ENCODE measurements at regions of chr20 and their contacts with region 1.

Region 1: DNA sequence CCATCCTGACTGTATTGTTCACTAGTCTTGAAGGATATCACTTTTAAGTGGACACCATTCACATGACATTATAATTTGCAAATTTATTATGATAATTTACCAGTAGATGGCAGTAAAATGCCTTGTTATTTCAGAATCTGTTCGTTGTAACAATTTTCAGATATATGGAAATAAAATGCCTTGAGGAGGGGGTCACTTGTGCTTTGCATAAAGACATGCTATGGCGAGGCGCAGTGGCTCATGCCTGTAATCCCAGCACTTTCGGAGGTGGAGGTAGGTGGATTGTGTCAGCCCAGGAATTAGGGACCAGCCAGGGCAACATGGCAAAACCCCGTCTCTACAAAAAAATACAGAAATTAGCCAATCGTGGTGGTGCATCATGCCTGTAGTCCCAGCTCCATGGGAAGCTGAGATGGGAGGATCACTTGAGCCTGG is 9.0 kb upstream of the NCOA6 start:
- DNase-seq: no peak
- ATAC-seq: peak in 3 of 8 donors; percentile 39 to 58 (median 43)
- H3K4me3 ChIP-seq: no peak overlapping the region
- H3K27ac ChIP-seq: no peak overlapping the region
- H3K4me1 ChIP-seq: peaks cover 0 to 5% (median 0%) of the 10 kb centered on the region in 9 donors
- H3K27me3 ChIP-seq: no peaks in the 10 kb centered on the region
- CTCF ChIP-seq: peak; percentile 11 to 62 (median 50)

Region 2: GRCh38 chr20:34797012-34797995 is 37.2 kb before region 1 on chr20:
- intact Hi-C with region 1: no loop called
- DNase-seq: no peak
- ATAC-seq: no peak
- H3K4me3 ChIP-seq: no peak overlapping the region
- H3K27ac ChIP-seq: no peak overlapping the region
- H3K4me1 ChIP-seq: peaks cover 0 to 35% (median 8%) of the 10 kb centered on the region in 9 donors
- H3K27me3 ChIP-seq: no peaks in the 10 kb centered on the region
- CTCF ChIP-seq: no peak

Region 3: GRCh38 chr20:35063168-35063567 is 228.7 kb after region 1 on chr20:
- intact Hi-C with region 1: no loop called
- DNase-seq: no peak
- ATAC-seq: no peak
- H3K4me3 ChIP-seq: no peak overlapping the region
- H3K27ac ChIP-seq: no peak overlapping the region
- H3K4me1 ChIP-seq: peaks cover 0 to 33% (median 18%) of the 10 kb centered on the region in 9 donors
- H3K27me3 ChIP-seq: no peaks in the 10 kb centered on the region
- CTCF ChIP-seq: no peak

Region 4: DNA sequence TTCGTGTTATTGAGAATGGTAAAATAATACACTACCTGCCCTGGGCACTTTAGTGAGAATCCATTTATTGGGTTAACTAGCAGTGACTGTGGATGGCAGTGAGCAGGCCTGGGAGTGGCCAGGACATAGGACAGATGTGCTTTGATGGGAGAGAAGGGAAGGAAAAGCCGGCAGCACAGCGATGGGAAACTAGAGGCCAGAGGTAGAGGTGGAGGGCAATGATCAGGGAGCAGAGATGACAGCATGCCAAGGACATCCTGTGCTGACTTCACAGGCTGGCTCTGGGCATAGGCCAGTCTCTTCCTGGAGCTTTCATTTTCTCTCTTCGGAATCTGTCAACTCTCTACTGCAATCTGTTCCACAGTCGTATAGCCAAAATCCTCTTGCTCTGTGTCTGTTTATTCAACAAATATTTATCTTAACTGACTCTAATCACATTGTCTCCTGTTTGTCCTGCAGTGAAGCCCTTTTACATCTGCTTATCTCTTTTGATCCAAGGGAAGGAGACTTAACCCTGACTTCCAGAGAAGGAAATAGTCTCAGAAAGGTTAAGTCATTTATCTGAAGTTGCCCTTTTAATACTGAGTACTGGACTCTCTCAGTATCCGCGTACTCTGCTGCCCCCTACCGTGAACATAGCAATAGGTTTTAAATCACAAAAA is 373.6 kb after region 1 on chr20:
- intact Hi-C with region 1: loop called in 6 of 10 experiments (anchors 5 to 10 kb)
- DNase-seq: peak; percentile 66 to 90
- ATAC-seq: peak; percentile 91 to 98 (median 96)
- H3K4me3 ChIP-seq: peak overlapping the region in 7 of 10 donors; percentile 1 to 32 (median 24)
- H3K27ac ChIP-seq: peak overlapping the region; percentile 36 to 82 (median 60)
- H3K4me1 ChIP-seq: peaks cover 0 to 13% (median 5%) of the 10 kb centered on the region in 9 donors
- H3K27me3 ChIP-seq: no peaks in the 10 kb centered on the region
- CTCF ChIP-seq: peak; percentile 77 to 89 (median 82)

Region 5: DNA sequence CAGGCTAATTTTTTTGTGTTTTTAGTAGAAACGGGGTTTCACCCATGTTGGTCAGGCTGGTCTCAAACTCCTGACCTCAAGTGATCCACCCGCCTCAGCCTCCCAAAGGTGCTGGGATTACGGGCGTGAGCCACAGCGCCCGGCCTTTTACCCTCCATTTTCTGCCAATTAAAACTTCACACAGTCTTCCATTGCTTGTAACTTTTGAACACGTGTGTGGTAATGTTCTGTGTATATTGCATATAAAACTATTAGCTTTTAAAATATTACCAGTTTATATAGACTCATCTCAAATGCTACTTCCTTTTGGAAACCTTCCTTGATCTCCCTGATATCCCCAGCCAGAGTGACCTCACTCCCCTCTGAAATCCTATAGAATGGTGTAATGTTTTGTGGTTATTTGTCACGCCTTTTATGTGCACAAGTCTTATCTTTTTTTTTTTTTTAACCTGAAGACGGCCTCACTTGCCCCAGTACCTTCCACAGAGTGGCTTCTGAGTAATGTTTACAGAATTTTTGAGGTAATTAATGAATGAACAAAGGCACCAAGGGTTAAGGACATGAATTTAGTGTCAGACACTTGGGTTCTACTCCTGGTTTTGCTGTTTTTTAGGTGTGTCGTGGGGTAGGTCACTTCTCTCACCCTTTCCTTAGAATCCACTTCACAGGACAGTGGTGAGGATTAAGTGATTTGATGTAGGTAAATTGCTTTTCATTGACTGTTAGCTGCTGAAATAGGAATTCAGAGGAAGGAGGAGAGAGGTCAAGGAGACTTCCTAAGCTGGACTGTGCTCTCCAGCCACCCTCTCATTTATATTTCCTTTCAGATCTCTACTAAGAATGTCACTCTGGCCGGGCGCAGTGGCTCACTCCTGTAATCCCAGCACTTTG is 380.8 kb after region 1 on chr20:
- intact Hi-C with region 1: loop called in 2 of 10 experiments (anchors 10 kb)
- DNase-seq: no peak
- ATAC-seq: no peak
- H3K4me3 ChIP-seq: no peak overlapping the region
- H3K27ac ChIP-seq: no peak overlapping the region
- H3K4me1 ChIP-seq: no peaks in the 10 kb centered on the region
- H3K27me3 ChIP-seq: no peaks in the 10 kb centered on the region
- CTCF ChIP-seq: no peak

Region 6: GRCh38 chr20:35269055-35269781 is 434.7 kb after region 1 on chr20:
- intact Hi-C with region 1: loop called in 5 of 10 experiments (anchors 10 kb)
- DNase-seq: peak; percentile 52 to 63
- ATAC-seq: peak; percentile 43 to 76 (median 70)
- H3K4me3 ChIP-seq: no peak overlapping the region
- H3K27ac ChIP-seq: no peak overlapping the region
- H3K4me1 ChIP-seq: peaks cover 0 to 16% (median under 1%) of the 10 kb centered on the region in 9 donors
- H3K27me3 ChIP-seq: no peaks in the 10 kb centered on the region
- CTCF ChIP-seq: peak; percentile 43 to 78 (median 72)

Region 7: GRCh38 chr20:35277531-35278395 is 443.3 kb after region 1 on chr20 and contains the start of gene MMP24OS:
- intact Hi-C with region 1: loop called in 4 of 10 experiments (anchors 10 kb)
- DNase-seq: peak; percentile 89 to 93
- ATAC-seq: peak; percentile 91 to 97 (median 96)
- H3K4me3 ChIP-seq: peak within 1 kb of the TSS; percentile 56 to 89 (median 80)
- H3K27ac ChIP-seq: peak within 1 kb of the TSS; percentile 96 to 99 (median 98)
- H3K4me1 ChIP-seq: peaks cover 3 to 41% (median 16%) of the 10 kb centered on the region in 9 donors
- H3K27me3 ChIP-seq: no peaks in the 10 kb centered on the region
- CTCF ChIP-seq: peak in 5 of 9 donors; percentile 20 to 49 (median 40)
- total RNA-seq, gene MMP24OS: 36.8 to 62.4 (median 46.1) TPM

Region 8: DNA sequence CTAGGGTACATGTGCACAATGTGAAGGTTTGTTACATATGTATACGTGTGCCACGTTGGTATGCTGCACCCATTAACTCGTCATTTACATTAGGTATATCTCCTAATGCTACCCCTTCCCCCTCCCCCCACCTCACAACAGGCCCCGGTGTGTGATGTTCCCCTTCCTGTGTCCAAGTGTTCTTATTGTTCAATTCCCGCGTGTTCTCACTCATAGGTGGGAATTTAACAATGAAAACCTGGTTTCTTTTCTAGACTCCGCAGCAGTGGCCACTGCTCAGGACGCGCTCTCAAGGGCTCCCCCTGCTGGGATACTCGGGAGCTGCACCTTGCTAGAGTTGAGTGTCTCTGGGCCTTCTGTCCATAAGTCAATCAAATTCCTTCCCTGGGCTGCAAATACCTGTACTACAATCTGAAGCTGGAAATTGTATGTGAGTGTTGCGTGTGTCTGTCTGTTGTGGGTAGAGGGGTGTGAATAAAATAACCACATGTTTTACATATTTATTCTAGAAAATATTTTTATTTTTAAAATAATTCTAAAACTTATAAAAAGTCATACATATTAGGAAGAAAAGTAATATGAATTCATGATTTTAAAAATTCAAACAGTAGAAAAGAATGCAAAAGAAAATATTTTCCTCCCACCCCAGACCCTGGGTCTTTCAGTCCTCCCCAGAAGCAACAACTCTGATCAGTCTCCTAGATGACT is 612.8 kb after region 1 on chr20:
- intact Hi-C with region 1: loop called in 2 of 10 experiments (anchors 10 kb)
- DNase-seq: peak; percentile 86 to 88
- ATAC-seq: peak; percentile 60 to 91 (median 86)
- H3K4me3 ChIP-seq: peak overlapping the region in 8 of 10 donors; percentile 30 to 47 (median 43)
- H3K27ac ChIP-seq: no peak overlapping the region
- H3K4me1 ChIP-seq: peaks cover 0 to 5% (median 0%) of the 10 kb centered on the region in 9 donors
- H3K27me3 ChIP-seq: peaks cover 0 to 7% (median 0%) of the 10 kb centered on the region in 7 donors
- CTCF ChIP-seq: peak; percentile 88 to 97 (median 94)

Measured in heart right ventricle (tissue), 16 donors.